BJ (cell line): ENCODE measurements at regions of chr3 and their contacts with region 1.

Region 1: DNA sequence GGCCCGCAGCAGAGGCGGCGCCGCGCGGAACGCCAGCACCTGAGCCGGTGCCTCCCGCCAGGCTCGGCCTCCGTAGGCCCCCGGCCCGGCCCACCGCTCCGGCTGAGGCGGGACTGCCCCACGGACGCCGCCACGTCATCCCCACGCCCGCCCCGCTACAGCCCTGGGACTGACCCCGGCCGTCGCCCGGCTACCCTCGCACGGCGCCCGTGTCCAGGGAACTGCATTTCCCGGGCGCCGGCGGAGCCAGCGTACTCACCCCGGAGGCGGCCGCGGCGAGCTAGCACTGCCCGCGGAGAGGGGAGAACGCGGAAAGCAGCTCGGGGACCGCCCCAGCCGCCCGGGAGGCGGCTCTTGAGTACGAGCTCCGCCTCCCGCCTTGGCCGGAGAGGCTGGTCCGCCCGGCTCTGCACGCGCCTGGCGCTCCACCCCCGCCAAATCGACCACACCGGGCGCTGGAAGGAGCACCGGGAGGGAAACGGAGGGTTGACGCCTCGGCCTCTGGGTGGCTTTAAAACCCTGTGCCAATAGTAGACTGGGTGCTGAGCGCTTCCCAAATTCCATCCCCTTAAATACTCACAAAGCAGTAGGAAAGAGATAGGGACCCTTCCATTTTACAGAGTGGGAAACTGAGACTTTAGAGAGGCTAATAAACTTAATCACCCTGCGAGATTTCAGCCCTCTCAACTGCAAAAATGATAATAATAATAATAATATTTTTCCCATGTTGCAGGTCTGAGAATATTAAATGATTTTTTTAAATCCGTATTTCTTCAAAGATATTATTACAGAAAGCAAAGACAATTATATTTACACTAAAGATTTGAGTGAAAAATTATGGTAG is at the start of gene B4GALT4:
- DNase-seq: no peak
- H3K4me3 ChIP-seq: peak within 1 kb of the TSS; percentile 55
- H3K27me3 ChIP-seq: no peaks in the 10 kb centered on the region
- CTCF ChIP-seq: no peak
- polyA plus RNA-seq, gene B4GALT4: 20.9 and 30.2 TPM in 2 replicates

Region 2: GRCh38 chr3:119145500-119146191 is 95.2 kb before region 1 on chr3 and contains the start of gene TEX55:
- CTCF ChIA-PET with region 1: interaction called, 86 read pairs
- POLR2A ChIA-PET with region 1: no interaction called
- DNase-seq: no peak
- H3K4me3 ChIP-seq: no peak within 1 kb of the TSS
- H3K27me3 ChIP-seq: no peaks in the 10 kb centered on the region
- CTCF ChIP-seq: peak; percentile 79
- polyA plus RNA-seq, gene TEX55: not detected in 2 replicates

Region 3: DNA sequence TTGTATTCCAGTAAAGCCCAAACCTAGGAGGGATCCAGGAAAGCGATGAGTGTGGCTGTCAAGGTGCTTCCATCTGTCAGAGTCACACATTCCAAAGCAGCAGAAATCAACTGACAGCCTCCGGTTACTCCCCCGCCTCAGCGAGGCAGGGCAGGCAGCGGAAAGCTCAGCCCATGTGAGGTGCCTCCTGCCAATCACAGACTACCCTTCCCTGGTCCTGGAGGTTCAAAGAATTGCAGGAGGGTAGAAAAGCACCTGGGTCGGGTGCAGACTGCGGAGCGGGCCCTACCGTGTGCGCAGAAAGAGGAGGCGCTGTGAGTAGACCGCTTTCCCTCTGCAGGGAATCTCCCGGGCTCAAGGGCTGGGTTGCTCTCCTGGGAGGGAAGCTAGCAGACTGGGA is 67.5 kb before region 1 on chr3 and contains the start of gene UPK1B:
- CTCF ChIA-PET with region 1: no interaction called
- POLR2A ChIA-PET with region 1: no interaction called
- DNase-seq: no peak
- H3K4me3 ChIP-seq: no peak within 1 kb of the TSS
- H3K27me3 ChIP-seq: no peaks in the 10 kb centered on the region
- CTCF ChIP-seq: no peak
- polyA plus RNA-seq, gene UPK1B: 0.05 TPM in 1 of 2 replicates, not detected in the other

Region 4: DNA sequence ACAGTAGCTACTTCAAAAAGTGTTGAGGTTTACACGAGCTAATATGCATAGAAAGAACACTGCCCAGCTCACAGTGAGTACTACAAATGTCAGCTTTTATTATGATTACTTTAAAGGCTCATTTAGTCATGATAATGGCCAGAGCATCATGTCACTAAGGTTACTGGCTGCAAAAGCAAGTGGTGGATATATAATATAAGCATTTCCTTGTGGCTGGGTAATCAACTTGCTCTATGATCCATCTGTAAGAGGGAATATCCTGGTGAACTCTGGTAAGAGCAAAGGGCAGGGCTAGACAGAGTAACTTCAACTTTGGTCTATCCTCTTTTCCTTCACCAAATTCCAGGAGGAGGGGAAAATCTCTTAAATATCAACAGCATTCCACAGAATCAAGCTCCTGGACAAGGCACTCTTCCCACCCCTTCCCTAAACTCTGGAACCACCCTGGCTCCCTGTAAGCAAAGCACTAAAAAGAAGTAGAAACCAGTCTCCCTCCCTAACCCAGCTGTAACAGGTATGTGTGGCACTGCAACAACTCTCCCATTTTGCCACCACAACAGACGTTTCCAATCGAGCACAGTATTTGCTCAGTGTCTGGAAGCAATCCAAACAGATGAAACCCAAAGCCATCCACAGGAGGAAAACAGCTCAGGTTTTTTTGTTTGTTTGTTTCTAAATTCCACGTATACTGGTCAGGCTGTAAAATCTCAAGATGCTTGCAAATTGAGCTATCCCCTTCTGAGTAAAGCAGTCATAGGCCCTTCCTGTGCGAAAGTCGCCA is 13.6 kb before region 1 on chr3:
- CTCF ChIA-PET with region 1: interaction called, 11 read pairs
- POLR2A ChIA-PET with region 1: interaction called, 7 read pairs
- DNase-seq: no peak
- H3K4me3 ChIP-seq: no peak overlapping the region
- H3K27me3 ChIP-seq: no peaks in the 10 kb centered on the region
- CTCF ChIP-seq: no peak